ENCODE measurements at regions of chr20 and their contacts with region 1.

Region 1: DNA sequence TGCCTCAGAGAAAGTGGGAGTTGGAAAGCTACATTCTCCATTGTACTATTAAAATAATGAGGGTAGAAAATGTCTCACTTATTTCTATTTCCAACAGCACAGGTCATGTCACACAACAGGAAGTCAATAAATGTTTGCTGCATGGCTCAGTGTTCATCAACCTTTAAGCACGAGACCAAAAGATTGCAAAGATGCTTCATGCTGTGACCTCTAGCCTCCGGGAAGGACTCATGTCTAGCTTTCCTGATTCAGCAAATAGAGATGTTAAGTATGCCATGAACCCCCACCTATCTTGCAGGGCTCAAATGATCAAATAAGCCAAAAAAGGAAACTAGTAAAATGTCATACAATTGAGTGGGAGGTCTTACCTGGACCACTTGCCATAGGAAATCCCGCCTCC is 57.4 kb downstream of the NCOA6 start:
- DNase-seq: no peak
- H3K4me3 Mint-ChIP-seq: no peak overlapping the region
- H3K27ac Mint-ChIP-seq: no peak overlapping the region
- H3K4me1 Mint-ChIP-seq: peaks cover 2% of the 10 kb centered on the region
- H3K27me3 Mint-ChIP-seq: no peaks in the 10 kb centered on the region

Region 2: GRCh38 chr20:34538671-34539123 is 229.4 kb before region 1 on chr20:
- CTCF ChIA-PET with region 1: interaction called, 34 read pairs
- POLR2A ChIA-PET with region 1: no interaction called
- DNase-seq: peak; percentile 61
- H3K4me3 Mint-ChIP-seq: no peak overlapping the region
- H3K27ac Mint-ChIP-seq: no peak overlapping the region
- H3K4me1 Mint-ChIP-seq: peaks cover 19% of the 10 kb centered on the region
- H3K27me3 Mint-ChIP-seq: no peaks in the 10 kb centered on the region

Region 3: DNA sequence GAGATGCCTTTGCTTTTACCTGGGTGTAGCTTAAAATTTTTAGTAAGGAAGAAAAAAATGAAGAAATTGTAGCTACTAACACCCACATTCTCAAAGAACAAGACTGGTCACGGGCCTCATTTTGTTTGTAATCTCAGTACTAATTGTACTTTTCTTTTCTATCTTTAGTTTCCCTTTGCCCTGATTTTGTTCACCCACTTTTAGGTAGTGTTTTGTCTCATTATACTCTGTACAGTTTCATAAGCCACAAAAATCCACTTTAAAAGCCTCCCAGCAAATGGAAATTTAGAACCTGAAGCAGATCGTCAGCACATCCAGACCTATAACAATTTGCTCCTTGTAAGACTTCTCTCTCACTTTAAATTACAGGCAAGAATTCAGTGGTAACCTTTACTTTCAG is 20.6 kb before region 1 on chr20:
- CTCF ChIA-PET with region 1: interaction called, 12 read pairs
- POLR2A ChIA-PET with region 1: no interaction called
- DNase-seq: no peak
- H3K4me3 Mint-ChIP-seq: no peak overlapping the region
- H3K27ac Mint-ChIP-seq: no peak overlapping the region
- H3K4me1 Mint-ChIP-seq: peaks cover 8% of the 10 kb centered on the region
- H3K27me3 Mint-ChIP-seq: no peaks in the 10 kb centered on the region

Region 4: DNA sequence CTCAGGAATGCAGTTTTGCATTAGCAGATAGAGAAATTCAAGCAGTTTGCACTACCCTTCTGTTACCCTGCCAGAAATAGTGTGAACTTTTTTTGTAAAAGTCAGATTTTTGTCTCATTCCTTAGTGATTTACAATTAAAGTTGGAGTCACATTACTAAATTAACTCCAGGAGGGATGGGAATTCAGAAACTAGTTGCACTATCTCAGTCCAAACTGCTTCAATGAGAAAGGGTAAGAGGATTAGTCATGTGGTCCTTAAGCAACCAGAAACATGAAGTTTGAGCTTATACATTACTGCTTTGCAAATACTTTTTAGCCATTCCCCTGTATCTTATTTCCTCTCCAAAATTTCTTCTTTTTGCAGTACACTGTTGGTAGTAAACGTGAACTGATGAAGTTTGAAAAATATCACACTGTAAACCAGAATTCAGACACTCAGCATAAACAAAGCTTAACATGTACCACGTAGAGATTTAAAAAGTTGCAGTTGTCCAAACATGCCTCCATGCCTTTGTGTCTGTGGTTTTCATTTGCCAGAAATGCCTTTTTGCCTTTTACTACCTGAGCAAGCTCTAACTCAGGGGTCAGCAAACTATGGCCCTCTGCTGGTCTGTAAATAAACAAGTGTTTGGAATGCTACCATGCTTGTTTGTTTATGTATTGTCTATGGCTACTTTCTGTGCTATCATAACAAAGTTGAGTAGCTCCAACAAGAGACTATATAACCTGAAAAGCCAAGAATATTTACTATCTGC is 14.2 kb before region 1 on chr20:
- CTCF ChIA-PET with region 1: interaction called, 15 read pairs
- POLR2A ChIA-PET with region 1: no interaction called
- DNase-seq: no peak
- H3K4me3 Mint-ChIP-seq: no peak overlapping the region
- H3K27ac Mint-ChIP-seq: no peak overlapping the region
- H3K4me1 Mint-ChIP-seq: no peaks in the 10 kb centered on the region
- H3K27me3 Mint-ChIP-seq: no peaks in the 10 kb centered on the region

Region 5: DNA sequence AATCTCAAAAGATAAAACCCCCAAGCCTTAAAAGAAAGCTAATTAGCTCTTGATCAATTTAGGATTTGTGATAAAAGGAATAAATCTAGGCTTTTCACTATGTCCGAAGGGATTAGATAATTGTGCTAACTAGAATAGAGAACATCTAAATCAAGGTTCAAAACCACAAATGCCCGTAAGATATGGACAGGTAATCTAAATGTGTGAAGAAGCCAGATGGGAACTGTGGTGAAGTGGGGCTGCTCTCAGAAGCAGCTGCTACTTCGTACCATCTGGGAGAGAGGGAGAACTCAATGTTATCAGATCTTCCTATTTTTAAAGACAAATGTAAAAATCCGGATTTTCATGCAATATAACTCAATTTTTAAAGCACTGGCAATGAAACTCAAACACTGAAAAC is 13.1 kb after region 1 on chr20:
- CTCF ChIA-PET with region 1: interaction called, 27 read pairs
- POLR2A ChIA-PET with region 1: no interaction called
- DNase-seq: no peak
- H3K4me3 Mint-ChIP-seq: no peak overlapping the region
- H3K27ac Mint-ChIP-seq: no peak overlapping the region
- H3K4me1 Mint-ChIP-seq: no peaks in the 10 kb centered on the region
- H3K27me3 Mint-ChIP-seq: no peaks in the 10 kb centered on the region